ENCODE measurements at regions of chr6 and their contacts with region 1.

Region 1: GRCh38 chr6:37131104-37131959 is 38.6 kb upstream of the PIM1 start:
- DNase-seq: no peak
- H3K4me3 Mint-ChIP-seq: no peak overlapping the region
- H3K27ac Mint-ChIP-seq: no peak overlapping the region
- H3K4me1 Mint-ChIP-seq: peaks cover 18% of the 10 kb centered on the region
- H3K27me3 Mint-ChIP-seq: no peaks in the 10 kb centered on the region

Region 2: DNA sequence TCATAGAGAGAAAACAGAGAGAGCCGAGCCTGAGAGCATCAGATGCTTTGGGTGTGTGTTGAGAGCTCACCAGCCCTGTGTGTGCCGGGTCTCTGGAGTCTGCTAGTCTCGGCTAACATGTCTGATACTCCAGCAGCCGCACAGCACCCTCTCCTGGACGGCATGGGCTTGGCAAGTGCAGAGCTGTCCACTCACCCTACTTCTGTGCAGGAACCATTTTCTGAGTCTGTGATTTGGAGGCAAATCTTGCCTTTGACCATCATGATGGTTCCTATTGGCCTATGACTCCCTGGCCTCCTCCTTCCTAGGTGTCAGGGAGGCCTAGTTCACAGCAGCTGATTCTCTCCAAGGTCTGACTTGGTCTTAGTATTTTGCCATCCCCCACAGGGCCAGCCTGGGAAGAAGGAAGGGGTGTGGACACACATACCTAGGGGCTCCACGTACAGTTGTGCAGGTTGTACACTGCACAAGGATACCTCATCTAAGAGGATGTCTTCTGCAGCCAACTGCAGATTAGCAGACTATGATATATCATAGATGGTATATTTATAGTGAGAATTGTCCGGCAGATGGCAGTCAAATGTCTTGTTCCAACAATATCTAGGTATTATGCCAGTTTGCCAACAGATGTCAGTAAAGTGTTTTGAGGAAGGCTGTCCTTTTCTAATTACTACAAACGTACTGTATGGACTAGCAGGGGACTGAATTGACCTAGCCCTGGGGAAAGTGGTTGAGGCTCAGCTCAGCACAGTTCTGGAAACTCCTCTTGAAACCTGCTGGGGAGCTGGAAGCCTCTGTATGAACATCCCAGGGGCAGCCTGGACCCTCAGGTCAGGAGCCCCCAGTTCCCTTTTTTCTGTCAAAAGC is 112.9 kb before region 1 on chr6:
- CTCF ChIA-PET with region 1: no interaction called
- POLR2A ChIA-PET with region 1: no interaction called
- DNase-seq: peak; percentile 95
- H3K4me3 Mint-ChIP-seq: no peak overlapping the region
- H3K27ac Mint-ChIP-seq: peak overlapping the region; percentile 85
- H3K4me1 Mint-ChIP-seq: peaks cover 54% of the 10 kb centered on the region
- H3K27me3 Mint-ChIP-seq: no peaks in the 10 kb centered on the region

Region 3: DNA sequence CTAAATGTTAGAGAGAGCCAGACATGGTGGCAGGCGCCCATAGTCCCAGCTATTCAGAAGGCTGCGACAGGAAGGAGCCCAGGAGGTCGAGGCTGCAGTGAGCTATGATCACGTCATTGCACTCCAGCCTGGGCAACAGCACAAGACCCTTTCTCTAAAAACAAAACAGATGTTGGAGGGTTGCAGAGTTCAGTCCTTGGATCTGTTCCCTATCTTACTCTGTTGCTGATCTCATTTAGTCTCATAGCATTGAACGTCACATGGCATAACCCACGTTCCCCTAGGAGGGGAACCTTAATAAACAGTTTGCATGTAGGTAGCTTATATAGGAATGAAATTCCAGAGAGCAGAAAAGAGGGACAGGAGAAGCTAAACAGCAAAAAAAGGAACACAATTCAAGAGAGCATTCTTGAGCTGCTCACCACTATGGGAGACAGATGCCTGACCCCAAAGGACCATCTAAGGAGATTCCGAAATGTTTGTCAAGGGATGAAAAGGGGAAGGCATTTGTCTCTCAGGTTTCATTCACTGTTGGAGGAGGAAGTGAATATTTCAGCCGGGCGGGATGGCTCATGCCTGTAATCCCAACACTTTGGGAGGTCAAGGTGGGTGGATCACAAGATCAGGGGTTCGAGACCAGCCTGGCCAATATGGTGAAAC is 16.0 kb before region 1 on chr6:
- CTCF ChIA-PET with region 1: interaction called, 10 read pairs
- POLR2A ChIA-PET with region 1: no interaction called
- DNase-seq: no peak
- H3K4me3 Mint-ChIP-seq: no peak overlapping the region
- H3K27ac Mint-ChIP-seq: no peak overlapping the region
- H3K4me1 Mint-ChIP-seq: peaks cover 13% of the 10 kb centered on the region
- H3K27me3 Mint-ChIP-seq: peaks cover 3% of the 10 kb centered on the region

Region 4: DNA sequence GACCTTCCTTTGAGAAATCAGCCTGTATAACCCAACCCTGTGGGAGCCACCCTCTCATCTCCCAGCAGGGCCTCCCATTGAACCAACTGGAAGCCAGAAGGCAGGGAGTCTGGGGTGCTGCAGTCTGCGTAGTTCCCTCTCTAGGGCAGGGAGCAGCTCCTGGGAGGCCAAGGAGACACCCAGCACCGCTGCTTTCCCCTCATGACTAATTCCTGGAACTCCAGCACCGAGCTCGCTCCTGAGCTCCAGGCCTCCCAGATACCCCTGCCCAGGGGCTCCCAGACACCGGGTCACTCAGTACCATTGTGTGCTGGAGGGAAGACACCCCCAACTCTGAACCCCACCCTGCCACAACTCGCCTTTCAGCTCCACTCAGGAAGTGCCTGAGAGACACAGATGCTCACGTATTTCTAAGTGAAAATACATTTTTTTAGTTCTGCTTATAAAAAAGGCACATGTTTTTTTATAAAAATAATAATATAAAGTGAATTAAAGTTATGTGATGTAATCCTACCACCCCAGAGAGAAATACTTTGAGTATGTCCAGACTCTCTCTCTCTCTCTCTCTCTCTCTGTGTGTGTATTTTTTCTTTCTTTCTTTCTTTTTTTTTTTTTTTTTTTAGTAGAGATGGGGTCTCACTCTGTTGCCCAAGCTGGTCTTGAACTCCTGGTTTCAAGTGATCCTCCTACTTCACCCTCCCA is 56.1 kb after region 1 on chr6:
- CTCF ChIA-PET with region 1: no interaction called
- POLR2A ChIA-PET with region 1: no interaction called
- DNase-seq: no peak
- H3K4me3 Mint-ChIP-seq: peak overlapping the region; percentile 18
- H3K27ac Mint-ChIP-seq: peak overlapping the region; percentile 95
- H3K4me1 Mint-ChIP-seq: peaks cover 70% of the 10 kb centered on the region
- H3K27me3 Mint-ChIP-seq: no peaks in the 10 kb centered on the region

Region 5: GRCh38 chr6:37298958-37299357 is 167.6 kb after region 1 on chr6:
- CTCF ChIA-PET with region 1: no interaction called
- POLR2A ChIA-PET with region 1: no interaction called
- DNase-seq: no peak
- H3K4me3 Mint-ChIP-seq: no peak overlapping the region
- H3K27ac Mint-ChIP-seq: no peak overlapping the region
- H3K4me1 Mint-ChIP-seq: peaks cover 12% of the 10 kb centered on the region
- H3K27me3 Mint-ChIP-seq: no peaks in the 10 kb centered on the region

Region 6: DNA sequence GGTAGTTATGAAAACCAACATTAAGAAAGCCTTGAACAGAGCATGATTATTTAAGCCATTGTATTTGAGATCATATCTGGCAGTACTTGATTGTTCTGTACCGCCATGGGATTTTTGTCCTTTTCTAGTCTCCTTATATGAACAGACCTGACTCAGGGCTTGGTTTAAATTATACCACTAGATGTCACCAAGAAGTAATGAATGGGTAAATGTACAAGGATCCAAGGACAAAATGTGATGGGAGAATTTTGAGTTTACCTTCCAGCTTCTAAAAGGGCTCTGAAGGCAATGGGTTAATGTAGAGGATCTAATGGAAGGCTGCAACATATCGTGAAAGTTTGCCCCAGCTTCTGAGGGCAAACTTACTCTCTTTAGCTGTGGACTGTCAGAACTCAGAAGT is 234.4 kb after region 1 on chr6:
- CTCF ChIA-PET with region 1: no interaction called
- POLR2A ChIA-PET with region 1: no interaction called
- DNase-seq: no peak
- H3K4me3 Mint-ChIP-seq: no peak overlapping the region
- H3K27ac Mint-ChIP-seq: no peak overlapping the region
- H3K4me1 Mint-ChIP-seq: peaks cover 6% of the 10 kb centered on the region
- H3K27me3 Mint-ChIP-seq: no peaks in the 10 kb centered on the region